Endothelial cell of umbilical vein (primary cell): ENCODE measurements at regions of chr13 and their contacts with region 1.

Region 1: GRCh38 chr13:97030705-97031452 is 36.6 kb upstream of the OXGR1 start:
- DNase-seq: peak; percentile 76
- H3K4me3 ChIP-seq: no peak overlapping the region
- H3K27ac ChIP-seq: no peak overlapping the region
- H3K4me1 ChIP-seq: peaks cover 19% of the 10 kb centered on the region
- H3K27me3 ChIP-seq: no peaks in the 10 kb centered on the region
- CTCF ChIP-seq: peak; percentile 29 to 33
- POLR2A ChIP-seq: no peak

Region 2: DNA sequence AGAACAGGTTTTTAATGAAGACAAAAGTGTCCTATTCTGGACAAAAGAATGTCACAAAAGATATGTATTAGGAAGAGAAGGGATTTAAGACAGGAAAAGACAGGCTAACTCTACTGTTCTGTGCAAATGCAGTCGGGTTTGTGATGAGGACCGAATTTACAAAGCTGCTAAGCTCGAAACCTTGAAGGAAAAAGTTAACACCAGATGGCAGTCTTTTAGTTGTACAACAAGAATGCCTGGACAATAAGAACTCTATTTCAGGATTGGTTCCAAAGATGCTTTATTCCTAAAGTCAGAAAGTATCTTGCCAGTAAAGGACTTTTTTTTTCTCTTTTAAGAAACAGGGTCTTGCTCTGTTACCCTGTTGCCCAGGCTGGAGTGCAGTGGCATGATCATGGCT is 889.9 kb before region 1 on chr13:
- CTCF ChIA-PET with region 1: no interaction called
- POLR2A ChIA-PET with region 1: no interaction called
- dilution Hi-C with region 1: no loop called
- intact Hi-C with region 1: loop called (anchors 5 kb)
- DNase-seq: no peak
- H3K4me3 ChIP-seq: no peak overlapping the region
- H3K27ac ChIP-seq: no peak overlapping the region
- H3K4me1 ChIP-seq: no peaks in the 10 kb centered on the region
- H3K27me3 ChIP-seq: no peaks in the 10 kb centered on the region
- CTCF ChIP-seq: no peak
- POLR2A ChIP-seq: no peak

Region 3: DNA sequence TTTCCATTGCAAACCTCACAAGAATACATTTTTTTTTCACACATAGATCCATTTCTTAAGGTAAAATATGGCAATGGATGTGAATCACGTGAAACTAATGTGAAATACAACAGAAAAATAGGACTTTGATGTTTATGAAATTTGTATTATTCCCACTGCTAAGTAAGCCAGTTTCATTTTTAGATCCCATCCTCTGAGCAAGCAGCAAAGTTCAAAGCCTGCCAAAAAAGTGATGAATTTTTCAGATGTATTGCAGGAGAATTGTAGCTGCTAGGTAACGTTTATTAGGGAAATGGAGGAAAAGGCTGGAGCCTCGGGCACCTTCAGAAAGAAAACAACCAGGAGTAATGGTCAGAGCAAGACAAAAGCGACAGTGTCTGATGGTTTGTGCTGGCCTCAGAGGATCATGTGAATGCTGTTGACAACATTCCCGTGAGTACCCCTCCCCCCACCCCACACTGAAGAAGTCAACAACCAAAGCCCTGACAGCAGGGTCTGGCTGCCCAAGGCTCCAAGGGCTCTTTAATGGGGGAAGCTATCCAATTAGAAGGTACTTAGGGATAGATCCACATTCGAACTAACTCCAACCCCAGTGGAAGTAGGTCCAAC is 132.1 kb before region 1 on chr13:
- CTCF ChIA-PET with region 1: no interaction called
- POLR2A ChIA-PET with region 1: no interaction called
- dilution Hi-C with region 1: no loop called
- intact Hi-C with region 1: no loop called
- DNase-seq: no peak
- H3K4me3 ChIP-seq: no peak overlapping the region
- H3K27ac ChIP-seq: no peak overlapping the region
- H3K4me1 ChIP-seq: peaks cover 9% of the 10 kb centered on the region
- H3K27me3 ChIP-seq: no peaks in the 10 kb centered on the region
- CTCF ChIP-seq: no peak
- POLR2A ChIP-seq: no peak

Region 4: GRCh38 chr13:96958286-96958891 is 72.5 kb before region 1 on chr13:
- CTCF ChIA-PET with region 1: no interaction called
- POLR2A ChIA-PET with region 1: no interaction called
- dilution Hi-C with region 1: no loop called
- intact Hi-C with region 1: loop called (anchors 2 kb)
- DNase-seq: peak; percentile 38
- H3K4me3 ChIP-seq: no peak overlapping the region
- H3K27ac ChIP-seq: no peak overlapping the region
- H3K4me1 ChIP-seq: no peaks in the 10 kb centered on the region
- H3K27me3 ChIP-seq: peaks cover 5 to 9% of the 10 kb centered on the region in 2 experiments
- CTCF ChIP-seq: peak; percentile 56 to 74
- POLR2A ChIP-seq: no peak

Region 5: DNA sequence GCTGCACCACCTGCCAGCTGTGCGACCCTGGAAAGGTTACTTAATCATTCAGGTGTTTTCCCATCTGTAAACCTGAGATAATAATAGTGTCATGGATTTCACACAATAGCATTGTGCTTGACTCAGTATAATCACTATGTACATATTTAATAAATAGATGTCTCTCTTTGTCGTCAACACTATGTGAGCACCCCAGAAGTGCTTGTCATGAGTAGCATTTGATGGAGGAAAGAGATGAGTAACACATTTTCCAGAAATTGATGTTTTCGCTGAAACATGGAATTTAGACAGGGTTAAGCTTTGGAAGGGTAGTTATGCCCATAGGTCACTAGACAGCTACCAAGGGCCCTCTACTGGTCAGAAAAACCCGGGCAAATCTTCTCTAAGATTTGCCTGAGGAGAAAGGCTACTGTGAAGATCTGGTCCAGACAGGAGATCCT is 181.7 kb after region 1 on chr13:
- CTCF ChIA-PET with region 1: interaction called, 4 read pairs
- POLR2A ChIA-PET with region 1: no interaction called
- dilution Hi-C with region 1: no loop called
- intact Hi-C with region 1: loop called (anchors 2 kb)
- DNase-seq: peak; percentile 56
- H3K4me3 ChIP-seq: no peak overlapping the region
- H3K27ac ChIP-seq: no peak overlapping the region
- H3K4me1 ChIP-seq: no peaks in the 10 kb centered on the region
- H3K27me3 ChIP-seq: no peaks in the 10 kb centered on the region
- CTCF ChIP-seq: peak; percentile 52 to 72
- POLR2A ChIP-seq: no peak

Region 6: DNA sequence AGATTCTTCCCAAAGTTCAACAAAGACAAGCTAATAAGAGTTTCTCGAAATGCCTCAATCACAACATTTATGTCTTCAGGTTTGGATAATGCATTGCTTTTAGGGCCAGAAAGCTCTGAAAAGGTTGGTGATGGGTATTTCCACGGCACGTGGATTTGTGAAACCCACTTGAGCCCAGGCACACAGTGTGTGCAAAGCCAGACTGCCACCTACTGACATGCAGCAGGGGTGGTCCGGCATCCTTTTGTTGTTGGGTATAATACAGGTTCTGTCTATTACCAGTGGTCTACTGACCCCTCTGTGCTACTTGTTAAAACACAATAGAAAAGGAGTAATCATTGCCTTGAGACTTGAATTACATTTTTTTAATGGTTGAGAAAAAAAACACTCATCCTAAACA is 628.7 kb after region 1 on chr13:
- CTCF ChIA-PET with region 1: no interaction called
- POLR2A ChIA-PET with region 1: no interaction called
- dilution Hi-C with region 1: no loop called
- intact Hi-C with region 1: loop called (anchors 2 kb)
- DNase-seq: peak; percentile 45
- H3K4me3 ChIP-seq: no peak overlapping the region
- H3K27ac ChIP-seq: no peak overlapping the region
- H3K4me1 ChIP-seq: peaks cover 54% of the 10 kb centered on the region
- H3K27me3 ChIP-seq: no peaks in the 10 kb centered on the region
- CTCF ChIP-seq: peak; percentile 30 to 41
- POLR2A ChIP-seq: no peak